Activated naive CD4-positive, alpha-beta T cell treated with anti-CD3 and anti-CD28 coated beads, Interleukin-2, amount 10 ng/mL, durations not matched to agents 7 days and 5 days (primary cell): ENCODE measurements at regions of chr10 and their contacts with region 1.

Region 1: GRCh38 chr10:11170993-11171851 is 153.6 kb downstream of the CELF2 start:
- DNase-seq: no peak
- H3K4me3 Mint-ChIP-seq: no peak overlapping the region
- H3K27ac Mint-ChIP-seq: no peak overlapping the region
- H3K4me1 Mint-ChIP-seq: peaks cover 40% of the 10 kb centered on the region
- H3K27me3 Mint-ChIP-seq: no peaks in the 10 kb centered on the region

Region 2: GRCh38 chr10:11145495-11145855 is 25.7 kb before region 1 on chr10:
- CTCF ChIA-PET with region 1: interaction called, 75 read pairs
- DNase-seq: peak; percentile 84
- H3K4me3 Mint-ChIP-seq: peak overlapping the region; percentile 68
- H3K27ac Mint-ChIP-seq: peak overlapping the region; percentile 96
- H3K4me1 Mint-ChIP-seq: peaks cover 100% of the 10 kb centered on the region
- H3K27me3 Mint-ChIP-seq: no peaks in the 10 kb centered on the region

Region 3: GRCh38 chr10:11286261-11286852 is 115.1 kb after region 1 on chr10:
- CTCF ChIA-PET with region 1: no interaction called
- DNase-seq: no peak
- H3K4me3 Mint-ChIP-seq: no peak overlapping the region
- H3K27ac Mint-ChIP-seq: peak overlapping the region; percentile 49
- H3K4me1 Mint-ChIP-seq: peaks cover 2% of the 10 kb centered on the region
- H3K27me3 Mint-ChIP-seq: no peaks in the 10 kb centered on the region